ENCODE measurements at regions of chr15 and their contacts with region 1.

Region 1: DNA sequence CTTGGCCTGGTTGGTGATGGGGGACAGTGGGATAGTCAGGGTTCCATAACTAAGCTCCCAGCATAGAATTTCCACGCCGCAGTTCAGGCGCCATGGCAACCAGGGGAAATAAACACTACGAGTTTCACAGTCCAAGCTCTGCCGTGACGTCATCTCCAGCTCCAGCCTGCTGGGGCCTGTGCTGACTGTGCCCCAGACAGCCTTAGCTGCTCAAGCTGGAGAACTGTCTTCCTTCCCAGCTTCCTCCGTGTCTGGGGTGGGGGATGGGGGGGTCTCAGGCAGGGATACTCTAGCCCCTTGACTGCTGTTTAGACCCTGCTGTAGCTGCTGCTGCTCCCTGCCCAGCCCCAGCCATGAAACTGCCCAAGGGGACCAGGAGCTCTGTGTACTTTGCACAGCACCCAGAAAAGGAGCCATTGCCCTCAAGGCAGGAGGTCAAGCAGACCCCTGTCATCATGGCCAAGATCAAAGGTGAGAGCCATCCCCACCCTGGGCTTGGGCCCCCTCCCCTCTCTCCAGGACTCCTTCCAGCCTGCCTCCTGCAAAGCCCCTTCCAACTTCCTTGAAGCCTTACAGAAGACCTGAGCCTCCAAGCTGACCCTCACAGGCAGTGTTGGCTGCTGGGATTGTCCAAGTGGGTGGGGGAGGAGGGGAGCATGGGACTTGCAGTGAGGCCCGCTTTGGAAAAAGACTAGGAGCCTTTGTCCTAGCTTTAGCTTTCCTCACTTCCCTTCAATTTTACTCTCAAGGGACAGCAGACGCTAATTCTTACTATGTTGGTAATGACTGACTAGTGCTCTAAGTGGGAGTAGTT is 11.4 kb upstream of the CSPG4 start:
- DNase-seq: peak; percentile 88 to 93 (median 89)
- ATAC-seq: peak; percentile 83 to 91 (median 86)
- H3K4me3 ChIP-seq: no peak overlapping the region
- H3K27ac ChIP-seq: peak overlapping the region in 2 of 3 donors; percentile 45 to 52
- H3K4me1 ChIP-seq: peaks cover 0 to 12% (median 5%) of the 10 kb centered on the region in 4 donors
- H3K27me3 ChIP-seq: no peaks in the 10 kb centered on the region
- CTCF ChIP-seq: no peak
- POLR2A ChIP-seq: no peak

Region 2: GRCh38 chr15:75666823-75667501 is 57.1 kb before region 1 on chr15:
- intact Hi-C with region 1: no loop called
- DNase-seq: peak in 1 of 3 donors; percentile 30
- ATAC-seq: peak in 1 of 4 donors; percentile 22
- H3K4me3 ChIP-seq: no peak overlapping the region
- H3K27ac ChIP-seq: peak overlapping the region in 1 of 3 donors; percentile 29
- H3K4me1 ChIP-seq: peaks cover 0 to 30% (median 16%) of the 10 kb centered on the region in 4 donors
- H3K27me3 ChIP-seq: no peaks in the 10 kb centered on the region
- CTCF ChIP-seq: no peak
- POLR2A ChIP-seq: no peak

Region 3: DNA sequence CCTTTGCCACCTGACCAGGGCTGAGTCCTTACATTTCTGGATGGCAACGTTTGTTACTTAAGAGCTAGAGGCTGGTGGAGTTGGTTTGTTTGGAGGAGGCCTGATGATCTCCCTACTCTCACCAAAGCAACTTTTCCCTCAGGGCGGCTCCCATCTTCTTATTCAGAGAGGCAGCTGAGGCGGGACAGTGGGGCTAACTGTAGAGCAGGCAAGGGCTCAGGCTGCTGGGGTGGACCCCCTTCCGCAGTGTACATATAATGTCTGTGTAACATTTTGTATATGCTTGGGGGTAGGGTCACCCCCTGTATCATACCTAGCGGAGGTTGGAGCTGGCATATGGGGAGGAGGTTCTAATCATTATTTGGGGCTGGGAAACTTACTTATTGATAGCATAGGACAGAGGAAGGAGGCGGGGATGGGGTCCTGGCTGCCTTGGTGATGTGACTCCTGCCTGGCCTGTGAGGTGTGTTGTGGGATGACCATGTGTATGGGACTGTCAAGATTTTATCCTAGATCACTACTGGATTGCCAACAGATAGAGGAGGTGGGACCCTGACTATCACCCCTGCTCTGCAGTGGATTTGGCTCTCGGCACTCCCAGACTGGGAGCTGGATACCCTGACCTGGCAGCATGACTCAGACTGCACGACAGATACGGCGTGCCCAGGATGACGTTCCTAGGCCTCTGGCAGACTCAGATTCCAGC is 66.7 kb after region 1 on chr15:
- intact Hi-C with region 1: loop called (anchors 5 to 10 kb)
- DNase-seq: no peak
- ATAC-seq: no peak
- H3K4me3 ChIP-seq: no peak overlapping the region
- H3K27ac ChIP-seq: no peak overlapping the region
- H3K4me1 ChIP-seq: no peaks in the 10 kb centered on the region
- H3K27me3 ChIP-seq: no peaks in the 10 kb centered on the region
- CTCF ChIP-seq: no peak
- POLR2A ChIP-seq: no peak

Region 4: DNA sequence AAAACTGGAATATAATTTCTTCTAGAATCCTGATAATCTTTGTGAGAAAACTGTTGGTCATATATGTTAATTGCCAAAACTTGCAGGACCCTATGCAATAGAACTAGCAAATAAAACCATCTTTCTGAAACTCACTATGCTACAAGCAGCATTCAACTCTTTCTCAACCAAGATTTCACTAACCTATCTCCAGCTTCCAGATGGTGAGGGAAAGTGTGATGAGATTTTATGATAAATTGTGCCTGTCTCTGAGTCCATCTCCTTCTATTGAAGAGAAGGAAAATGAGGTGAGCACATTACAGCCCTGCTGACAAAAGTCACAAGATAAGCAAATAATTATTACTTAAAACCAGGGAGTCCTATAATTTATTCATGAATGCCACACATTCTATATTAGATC is 75.1 kb after region 1 on chr15:
- intact Hi-C with region 1: loop called (anchors 5 to 10 kb)
- DNase-seq: no peak
- ATAC-seq: no peak
- H3K4me3 ChIP-seq: no peak overlapping the region
- H3K27ac ChIP-seq: no peak overlapping the region
- H3K4me1 ChIP-seq: no peaks in the 10 kb centered on the region
- H3K27me3 ChIP-seq: no peaks in the 10 kb centered on the region
- CTCF ChIP-seq: no peak
- POLR2A ChIP-seq: no peak

Measured in right lobe of liver (tissue), 6 donors.